T-cell (primary cell): ENCODE measurements at regions of chr11 and their contacts with region 1.

Region 1: GRCh38 chr11:68257475-68258362 is 14.1 kb downstream of the C11orf24 start:
- DNase-seq: peak; percentile 77 to 97 (median 92)
- ATAC-seq: peak; percentile 83 to 97 (median 87)
- H3K4me3 ChIP-seq: no peak overlapping the region
- H3K4me3 Mint-ChIP-seq: no peak overlapping the region
- H3K27ac ChIP-seq: no peak overlapping the region
- H3K27ac Mint-ChIP-seq: no peak overlapping the region
- H3K4me1 ChIP-seq: peaks cover 0 to 9% of the 10 kb centered on the region in 2 experiments
- H3K4me1 Mint-ChIP-seq: peaks cover 0 to 5% (median 3%) of the 10 kb centered on the region in 3 donors
- H3K27me3 ChIP-seq: peaks cover 0 to 27% of the 10 kb centered on the region in 2 experiments
- H3K27me3 Mint-ChIP-seq: peaks cover 2 to 4% of the 10 kb centered on the region in 2 donors

Region 2: DNA sequence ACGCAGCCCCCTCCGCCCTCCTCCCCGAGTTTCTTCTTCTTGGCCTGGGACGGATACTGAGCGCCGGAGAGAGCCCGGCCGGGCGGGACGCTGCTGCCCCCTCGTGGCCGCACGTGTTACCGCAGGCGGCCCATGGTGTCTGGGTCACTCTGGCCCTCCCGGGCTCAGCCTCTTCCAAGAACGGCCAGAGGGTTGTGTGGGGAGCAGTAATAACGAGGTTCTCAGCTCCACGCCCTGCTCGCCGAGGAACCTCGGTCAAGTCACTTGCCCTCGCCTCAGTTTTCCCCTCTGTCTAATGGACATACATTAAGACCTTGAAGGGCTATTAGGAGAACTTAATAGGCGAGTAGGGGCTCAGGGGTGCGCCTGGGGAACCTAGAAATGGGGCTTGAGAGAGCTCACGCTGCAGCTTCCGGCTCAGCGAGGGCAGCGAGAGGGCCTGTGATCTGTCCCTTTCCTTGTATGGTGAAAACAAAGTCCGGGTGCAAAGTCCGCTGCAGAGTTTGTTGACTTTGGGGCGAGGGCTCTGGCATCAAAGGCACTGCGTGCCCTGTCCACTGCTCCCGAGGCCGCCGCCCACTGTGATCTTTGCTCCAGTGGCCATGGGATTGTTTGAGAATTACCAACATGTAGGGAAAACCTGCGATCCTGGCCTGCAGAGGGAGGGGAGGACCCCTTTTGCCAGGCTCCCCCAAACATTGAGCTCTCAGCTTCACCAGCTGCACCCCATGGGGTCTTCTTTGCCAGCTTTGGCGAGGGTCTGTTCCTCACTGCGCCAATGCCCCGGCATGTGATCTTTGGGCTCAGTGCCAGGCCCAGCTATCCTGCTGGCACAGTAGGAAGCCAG is 40.3 kb after region 1 on chr11:
- CTCF ChIA-PET with region 1: interaction called, 29 to 33 read pairs
- POLR2A ChIA-PET with region 1: no interaction called
- DNase-seq: peak; percentile 18 to 82 (median 60)
- ATAC-seq: peak; percentile 92 to 99 (median 94)
- H3K4me3 ChIP-seq: no peak overlapping the region
- H3K4me3 Mint-ChIP-seq: no peak overlapping the region
- H3K27ac ChIP-seq: no peak overlapping the region
- H3K27ac Mint-ChIP-seq: no peak overlapping the region
- H3K4me1 ChIP-seq: peaks cover 0 to 8% of the 10 kb centered on the region in 2 experiments
- H3K4me1 Mint-ChIP-seq: peaks cover 0 to 4% (median 1%) of the 10 kb centered on the region in 3 donors
- H3K27me3 ChIP-seq: peaks cover 0 to 19% of the 10 kb centered on the region in 2 experiments
- H3K27me3 Mint-ChIP-seq: no peaks in the 10 kb centered on the region